ENCODE measurements at regions of chr13 and their contacts with region 1.

Region 1: DNA sequence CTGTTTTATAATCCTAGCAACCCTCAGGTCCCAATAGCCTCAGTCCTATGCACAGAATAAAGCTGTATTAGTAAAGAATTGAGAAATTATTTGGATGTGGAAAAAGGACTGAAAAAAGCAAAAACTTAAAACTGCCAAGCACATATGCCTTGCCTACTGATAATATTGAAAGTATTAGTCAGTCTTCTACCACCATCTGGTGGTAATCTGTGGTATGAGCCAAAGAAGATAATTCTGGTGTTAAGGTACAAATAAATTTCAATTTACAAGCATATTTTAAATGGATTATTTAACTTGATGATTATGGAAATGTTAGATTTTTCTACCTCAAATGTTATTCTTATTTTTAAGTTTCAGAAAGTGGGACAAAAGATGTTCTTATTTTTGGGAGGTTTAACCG is 460.3 kb upstream of the KLHL1 start:
- DNase-seq: no peak
- H3K4me3 Mint-ChIP-seq: no peak overlapping the region
- H3K27ac Mint-ChIP-seq: no peak overlapping the region
- H3K4me1 Mint-ChIP-seq: no peaks in the 10 kb centered on the region
- H3K27me3 Mint-ChIP-seq: no peaks in the 10 kb centered on the region

Region 2: GRCh38 chr13:69857183-69857821 is 711.3 kb before region 1 on chr13:
- intact Hi-C with region 1: loop called (anchors 5 kb)
- DNase-seq: no peak
- H3K4me3 Mint-ChIP-seq: no peak overlapping the region
- H3K27ac Mint-ChIP-seq: no peak overlapping the region
- H3K4me1 Mint-ChIP-seq: no peaks in the 10 kb centered on the region
- H3K27me3 Mint-ChIP-seq: no peaks in the 10 kb centered on the region

Region 3: GRCh38 chr13:70284371-70284770 is 284.2 kb before region 1 on chr13:
- intact Hi-C with region 1: no loop called
- DNase-seq: no peak
- H3K4me3 Mint-ChIP-seq: no peak overlapping the region
- H3K27ac Mint-ChIP-seq: no peak overlapping the region
- H3K4me1 Mint-ChIP-seq: no peaks in the 10 kb centered on the region
- H3K27me3 Mint-ChIP-seq: no peaks in the 10 kb centered on the region

Region 4: DNA sequence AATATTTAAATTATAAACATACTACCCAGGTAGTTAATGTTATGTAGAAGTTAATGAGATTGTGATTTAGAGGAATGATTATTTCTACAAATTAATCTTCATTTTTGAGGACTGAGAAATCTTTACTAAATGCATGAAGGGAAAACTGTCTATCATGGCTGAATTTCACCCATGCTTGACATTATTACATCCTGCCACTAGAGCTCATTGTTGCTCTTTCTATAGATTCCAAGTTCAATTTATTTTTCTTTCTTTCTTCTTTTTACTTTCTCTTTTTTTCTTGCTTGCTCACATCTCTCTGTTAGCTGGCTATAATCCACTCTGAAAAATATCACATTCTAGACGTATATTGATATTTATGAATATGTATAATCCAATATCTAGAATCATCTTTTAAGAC is 44.7 kb after region 1 on chr13:
- intact Hi-C with region 1: no loop called
- DNase-seq: no peak
- H3K4me3 Mint-ChIP-seq: no peak overlapping the region
- H3K27ac Mint-ChIP-seq: no peak overlapping the region
- H3K4me1 Mint-ChIP-seq: no peaks in the 10 kb centered on the region
- H3K27me3 Mint-ChIP-seq: no peaks in the 10 kb centered on the region